ENCODE measurements at regions of chr6 and their contacts with region 1.

Region 1: GRCh38 chr6:85593438-85594196 is at the start of gene SNX14:
- DNase-seq: peak; percentile 36
- H3K4me3 ChIP-seq: peak within 1 kb of the TSS; percentile 57 to 98 (median 90)
- H3K27ac ChIP-seq: peak within 1 kb of the TSS; percentile 82
- H3K4me1 ChIP-seq: peaks cover 9% of the 10 kb centered on the region
- H3K27me3 ChIP-seq: no peaks in the 10 kb centered on the region
- CTCF ChIP-seq: peak in 2 of 3 experiments; percentile 8 to 17
- polyA plus RNA-seq, gene SNX14: 54.5 to 97.5 TPM (median 75.8 TPM) in 3 replicates

Region 2: DNA sequence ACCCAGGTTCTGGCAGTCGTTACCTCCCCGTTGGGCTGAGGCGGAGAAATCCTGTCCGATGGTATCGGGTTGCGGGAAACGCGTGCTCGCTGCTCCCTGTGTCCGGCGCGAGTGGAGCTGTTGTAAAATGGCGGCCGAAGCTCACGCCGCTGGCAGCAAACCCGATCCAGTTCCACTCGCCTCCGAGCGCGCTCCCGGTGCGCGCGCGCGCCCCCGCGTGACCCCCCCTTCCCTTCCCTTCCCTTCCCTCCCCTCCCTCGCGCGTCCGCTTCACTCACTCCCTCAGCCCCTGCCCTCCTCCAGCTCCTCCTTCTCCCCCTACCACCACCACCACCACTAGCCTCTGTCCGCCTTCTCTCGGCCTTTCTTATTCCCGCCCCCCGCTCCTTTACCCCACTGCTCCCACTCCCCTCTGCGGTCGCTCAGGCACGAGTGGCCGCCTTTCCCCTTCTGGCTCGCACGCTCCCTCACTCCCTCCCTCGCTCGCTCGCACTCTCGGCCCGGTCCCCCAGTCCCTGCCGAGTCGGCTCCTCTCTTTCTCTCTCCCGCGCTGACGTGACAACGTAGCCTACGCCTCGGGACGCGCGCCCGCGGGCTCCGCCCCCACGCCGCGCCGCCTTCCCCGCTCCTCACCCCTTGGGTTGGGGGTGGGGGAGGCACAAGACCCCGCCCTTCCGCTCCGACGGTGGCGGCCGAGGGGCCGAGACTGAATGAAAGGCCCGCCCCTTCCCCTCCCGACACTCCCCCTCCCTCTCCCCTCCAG is 49.3 kb after region 1 on chr6 and contains the start of gene SYNCRIP:
- dilution Hi-C with region 1: loop called (anchors 5 kb)
- DNase-seq: no peak
- H3K4me3 ChIP-seq: peak within 1 kb of the TSS; percentile 94 to 100 (median 94)
- H3K27ac ChIP-seq: peak within 1 kb of the TSS; percentile 98
- H3K4me1 ChIP-seq: peaks cover 22% of the 10 kb centered on the region
- H3K27me3 ChIP-seq: no peaks in the 10 kb centered on the region
- CTCF ChIP-seq: no peak
- polyA plus RNA-seq, gene SYNCRIP: 20.3 to 56.8 TPM (median 22.6 TPM) in 3 replicates

Region 3: GRCh38 chr6:85678602-85679444 is 85.2 kb after region 1 on chr6:
- dilution Hi-C with region 1: no loop called
- DNase-seq: peak; percentile 85
- H3K4me3 ChIP-seq: peak overlapping the region; percentile 93 to 100 (median 99)
- H3K27ac ChIP-seq: peak overlapping the region; percentile 94
- H3K4me1 ChIP-seq: peaks cover 24% of the 10 kb centered on the region
- H3K27me3 ChIP-seq: no peaks in the 10 kb centered on the region
- CTCF ChIP-seq: no peak

Region 4: DNA sequence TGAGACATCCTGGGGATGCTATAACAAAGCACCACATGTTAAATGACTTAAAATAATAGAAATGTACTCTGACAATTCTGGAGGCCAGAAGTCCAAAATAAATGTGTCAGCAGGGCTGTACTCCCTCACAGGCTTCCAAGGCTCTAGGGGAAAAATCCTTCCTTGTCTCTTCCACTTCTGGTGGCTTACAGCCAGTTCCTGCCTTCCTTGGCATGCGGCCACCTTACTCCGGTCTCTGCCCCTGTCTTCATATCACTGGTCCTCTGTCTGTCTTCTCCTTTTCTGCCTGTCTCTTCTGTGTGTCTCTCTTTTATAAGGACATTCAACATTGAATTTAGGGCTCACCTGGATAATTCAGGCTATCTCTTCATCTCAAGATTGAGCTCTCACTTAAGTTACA is 204.4 kb after region 1 on chr6:
- dilution Hi-C with region 1: no loop called
- DNase-seq: no peak
- H3K4me3 ChIP-seq: no peak overlapping the region
- H3K27ac ChIP-seq: no peak overlapping the region
- H3K4me1 ChIP-seq: no peaks in the 10 kb centered on the region
- H3K27me3 ChIP-seq: no peaks in the 10 kb centered on the region
- CTCF ChIP-seq: no peak